Heart right ventricle (tissue), 16 donors: ENCODE measurements at regions of chr16 and their contacts with region 1.

Region 1: GRCh38 chr16:57984331-57985203 is 13.6 kb upstream of the CNGB1 start:
- DNase-seq: peak; percentile 67 to 87
- ATAC-seq: peak; percentile 84 to 92 (median 90)
- H3K4me3 ChIP-seq: peak overlapping the region; percentile 19 to 65 (median 55)
- H3K27ac ChIP-seq: no peak overlapping the region
- H3K4me1 ChIP-seq: peaks cover 6 to 24% (median 15%) of the 10 kb centered on the region in 9 donors
- H3K27me3 ChIP-seq: peaks cover 0 to 13% (median 0%) of the 10 kb centered on the region in 7 donors
- CTCF ChIP-seq: no peak

Region 2: DNA sequence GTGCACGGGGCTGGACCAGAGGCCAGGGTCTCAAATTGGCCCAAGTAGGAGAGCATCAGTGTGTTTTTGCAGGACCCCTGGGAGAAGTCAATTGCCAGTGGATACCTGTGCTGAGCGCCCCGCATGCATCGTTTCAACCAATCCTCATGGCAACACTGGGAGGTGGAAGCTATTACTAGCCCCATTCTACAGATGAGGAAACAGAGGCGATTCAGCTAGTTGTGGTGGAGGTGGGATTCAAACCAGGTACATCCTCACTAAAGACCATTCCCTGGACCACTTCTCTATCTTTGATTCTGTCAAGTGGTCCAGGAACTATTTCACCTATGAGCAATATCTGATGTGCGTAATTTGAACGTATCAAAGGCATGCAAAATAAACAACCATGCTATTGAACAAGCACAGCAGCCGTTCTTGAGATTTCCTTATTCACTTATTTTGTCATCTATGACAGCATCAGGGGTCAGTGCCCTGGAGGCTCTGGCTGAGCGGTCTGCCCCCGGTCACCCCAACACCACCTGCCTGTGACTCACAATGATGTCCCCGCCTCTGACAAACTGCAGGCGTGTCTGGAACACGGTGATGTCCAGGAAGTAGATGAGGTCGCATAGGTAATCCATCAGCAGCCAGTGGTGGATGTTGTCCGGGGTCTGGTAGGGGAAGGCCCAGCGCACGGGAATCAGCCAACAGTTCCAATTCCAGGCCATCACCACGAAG is 67.7 kb before region 1 on chr16:
- intact Hi-C with region 1: loop called in 1 of 10 experiments (anchors 5 kb)
- DNase-seq: no peak
- ATAC-seq: no peak
- H3K4me3 ChIP-seq: no peak overlapping the region
- H3K27ac ChIP-seq: no peak overlapping the region
- H3K4me1 ChIP-seq: no peaks in the 10 kb centered on the region
- H3K27me3 ChIP-seq: no peaks in the 10 kb centered on the region
- CTCF ChIP-seq: no peak

Region 3: DNA sequence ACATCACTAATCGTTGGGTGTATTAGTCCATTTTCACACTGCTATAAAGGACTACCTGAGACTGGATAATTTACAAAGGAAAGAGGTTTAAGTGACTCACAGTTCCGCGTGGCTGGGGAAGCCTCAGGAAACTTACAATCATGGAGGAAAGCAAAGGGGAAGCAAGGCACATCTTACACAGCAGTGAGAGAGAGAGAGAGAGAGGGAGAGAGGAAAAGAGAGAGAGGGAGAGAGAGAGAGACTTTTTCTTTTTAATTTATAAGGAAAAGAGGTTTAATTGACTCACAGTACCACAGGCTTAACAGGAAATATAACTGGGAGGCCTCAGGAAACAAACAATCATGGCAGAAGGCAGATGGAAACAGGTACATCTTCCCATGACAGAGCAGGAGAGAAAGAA is 55.3 kb before region 1 on chr16:
- intact Hi-C with region 1: no loop called
- DNase-seq: no peak
- ATAC-seq: no peak
- H3K4me3 ChIP-seq: no peak overlapping the region
- H3K27ac ChIP-seq: no peak overlapping the region
- H3K4me1 ChIP-seq: no peaks in the 10 kb centered on the region
- H3K27me3 ChIP-seq: peaks cover 0 to 3% (median 0%) of the 10 kb centered on the region in 7 donors
- CTCF ChIP-seq: no peak